Thyroid gland (tissue), 4 donors: ENCODE measurements at regions of chr17 and their contacts with region 1.

Region 1: GRCh38 chr17:68759343-68760132 is 158.4 kb upstream of the FAM20A start:
- DNase-seq: peak; percentile 94
- H3K4me3 ChIP-seq: no peak overlapping the region
- H3K27ac ChIP-seq: peak overlapping the region; percentile 82 to 86 (median 84)
- H3K4me1 ChIP-seq: peaks cover 4 to 8% of the 10 kb centered on the region in 2 donors
- H3K27me3 ChIP-seq: no peaks in the 10 kb centered on the region
- CTCF ChIP-seq: peak; percentile 74 to 98 (median 94)
- POLR2A ChIP-seq: peak in 1 of 2 donors; percentile 47

Region 2: DNA sequence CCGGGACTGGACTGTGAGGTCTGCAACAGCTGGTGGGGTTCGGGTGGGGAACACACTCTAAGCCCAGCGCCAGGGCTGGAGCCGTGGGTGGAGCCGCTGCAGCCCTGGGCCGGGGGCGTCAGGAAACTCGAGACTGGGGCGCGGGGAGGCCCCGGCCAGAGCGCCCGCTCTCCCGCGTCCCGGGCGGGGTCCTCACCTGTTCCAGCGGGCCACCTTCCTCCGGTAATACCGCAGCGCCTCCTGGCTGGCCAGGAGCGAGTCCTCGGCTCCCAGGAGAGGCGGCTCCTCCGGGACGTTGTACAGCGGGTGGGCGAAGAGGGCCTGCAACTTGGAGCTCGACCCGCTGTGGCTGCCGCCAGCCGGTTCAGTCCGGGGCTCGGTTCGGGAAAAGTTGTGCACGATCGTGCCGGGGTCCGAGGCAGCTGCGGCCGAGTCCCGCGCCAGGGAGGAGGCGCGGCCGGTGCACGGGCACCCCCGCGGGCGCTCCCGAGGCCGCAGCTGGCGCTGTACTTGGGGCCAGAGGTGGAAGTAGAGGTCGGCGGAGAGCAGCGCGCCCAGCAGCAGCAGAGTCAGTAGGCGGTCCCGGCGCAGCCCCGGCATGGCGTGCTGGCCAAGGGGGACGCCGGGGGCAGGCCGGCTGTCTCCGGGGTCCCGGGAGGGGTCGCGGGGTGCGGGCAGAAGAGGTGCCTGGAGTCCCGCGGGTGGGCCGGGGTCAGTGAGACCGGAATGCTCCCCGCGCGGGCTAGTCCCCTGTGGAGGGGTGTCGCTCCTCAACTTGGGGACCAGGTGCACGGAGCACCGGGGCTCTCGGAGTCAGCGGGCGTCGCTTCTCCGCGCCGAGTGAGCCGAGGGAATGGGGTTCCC is 159.2 kb before region 1 on chr17:
- intact Hi-C with region 1: loop called (anchors 10 kb)
- DNase-seq: peak; percentile 79 to 87
- H3K4me3 ChIP-seq: peak overlapping the region; percentile 51 to 69 (median 66)
- H3K27ac ChIP-seq: peak overlapping the region; percentile 63 to 85 (median 75)
- H3K4me1 ChIP-seq: peaks cover 24 to 49% of the 10 kb centered on the region in 2 donors
- H3K27me3 ChIP-seq: no peaks in the 10 kb centered on the region
- CTCF ChIP-seq: peak in 4 of 6 experiments; percentile 55 to 82 (median 74)
- POLR2A ChIP-seq: peak in 1 of 2 donors; percentile 41